ENCODE measurements at regions of chr3 and their contacts with region 1.

Region 1: DNA sequence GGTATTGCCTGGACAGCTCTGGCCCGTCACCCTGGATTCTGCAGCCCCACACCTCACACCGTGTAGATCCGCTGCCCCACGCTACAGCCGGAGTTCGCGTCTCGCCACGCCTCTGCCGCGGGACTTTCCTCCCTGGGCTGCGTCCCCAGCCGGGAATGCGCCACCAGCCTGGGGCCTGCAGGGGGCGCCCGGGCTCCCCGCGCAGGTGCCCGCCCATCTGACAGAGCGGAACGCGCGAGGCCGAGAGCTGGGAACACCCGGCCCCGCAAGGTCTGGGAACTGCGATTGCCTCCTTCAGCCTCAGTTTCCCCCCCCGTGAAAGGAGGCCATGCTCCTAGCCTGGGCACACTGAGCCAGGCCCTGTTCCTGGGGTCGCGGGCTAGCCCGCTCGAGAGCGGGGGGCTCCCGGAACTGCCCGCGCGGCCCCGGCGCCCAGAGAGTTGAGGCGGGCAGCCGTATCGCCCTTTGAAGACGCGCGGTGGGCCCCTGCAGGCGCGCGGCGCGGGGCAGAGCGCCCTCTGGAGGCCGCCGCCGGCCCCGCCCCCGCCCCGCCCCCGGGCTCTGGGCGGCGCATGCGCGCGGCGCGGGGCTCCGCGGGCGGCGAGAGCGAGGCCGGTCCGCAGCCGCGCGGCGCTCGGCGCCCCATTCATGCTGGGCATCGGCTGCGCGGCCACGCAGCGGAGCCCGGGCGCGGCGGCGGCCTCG is at the start of gene PLXNA1:
- DNase-seq: peak; percentile 76 to 91 (median 77)
- ATAC-seq: peak; percentile 47 to 85 (median 78)
- H3K4me3 ChIP-seq: peak within 1 kb of the TSS; percentile 60 to 91 (median 78)
- H3K27ac ChIP-seq: peak within 1 kb of the TSS in 11 of 12 donors; percentile 60 to 93 (median 74)
- H3K4me1 ChIP-seq: peaks cover 0 to 50% (median 24%) of the 10 kb centered on the region in 12 donors
- H3K27me3 ChIP-seq: peaks cover 0 to 4% (median 0%) of the 10 kb centered on the region in 9 donors
- CTCF ChIP-seq: peak; percentile 81 to 93 (median 88)
- POLR2A ChIP-seq: peak in 1 of 2 donors; percentile 35
- total RNA-seq, gene PLXNA1: 19.5 to 38.8 (median 29.6) TPM

Region 2: GRCh38 chr3:126752303-126752842 is 230.2 kb before region 1 on chr3:
- intact Hi-C with region 1: loop called (anchors 1 to 5 kb)
- DNase-seq: peak; percentile 72 to 88 (median 79)
- ATAC-seq: peak; percentile 85 to 94 (median 90)
- H3K4me3 ChIP-seq: no peak overlapping the region
- H3K27ac ChIP-seq: no peak overlapping the region
- H3K4me1 ChIP-seq: peaks cover 0 to 38% (median 12%) of the 10 kb centered on the region in 12 donors
- H3K27me3 ChIP-seq: no peaks in the 10 kb centered on the region
- CTCF ChIP-seq: peak; percentile 74 to 91 (median 86)
- POLR2A ChIP-seq: no peak

Region 3: DNA sequence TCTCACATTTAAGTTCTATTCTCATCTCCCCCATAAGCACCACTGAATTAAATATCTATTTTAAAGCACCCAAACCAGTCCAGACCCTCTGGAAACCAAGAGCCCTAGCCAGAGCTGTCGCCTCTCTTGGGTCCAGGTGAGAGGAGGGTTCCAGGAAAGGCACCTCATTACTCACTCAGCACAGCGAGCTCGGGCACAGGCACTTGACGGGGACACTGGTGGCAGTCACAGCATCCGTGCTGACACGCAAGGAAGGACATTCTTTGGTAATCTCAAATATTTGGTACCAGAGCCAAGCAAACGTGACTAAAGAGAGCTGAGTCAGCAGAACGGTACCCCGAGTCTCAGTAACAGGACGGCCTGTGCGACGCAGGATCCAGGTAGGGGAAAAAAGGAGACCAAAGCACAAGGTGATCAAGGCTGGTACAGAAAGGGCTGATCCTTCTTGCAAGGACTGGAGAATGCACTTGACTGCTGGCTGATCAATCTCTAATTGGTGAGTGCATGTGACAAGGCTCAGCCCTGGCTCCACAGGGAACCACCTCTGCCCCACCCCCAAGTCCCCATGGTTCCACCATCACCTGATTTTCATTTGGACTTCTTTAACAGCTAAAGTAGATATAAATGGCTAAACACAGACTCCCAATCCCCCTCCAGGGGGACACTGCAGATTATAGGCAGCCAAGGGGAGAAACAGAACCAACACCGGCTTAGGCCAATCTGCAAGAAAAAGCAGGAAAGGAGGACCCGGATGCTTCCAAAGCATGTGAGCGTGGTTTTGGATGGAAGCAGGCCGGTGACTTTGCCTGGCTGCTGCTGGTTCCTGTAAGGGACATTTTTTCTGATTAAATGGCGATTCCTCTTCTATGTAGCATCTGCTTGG is 217.2 kb before region 1 on chr3:
- intact Hi-C with region 1: no loop called
- DNase-seq: peak in 2 of 5 donors; percentile 45 to 58
- ATAC-seq: peak; percentile 56 to 71 (median 63)
- H3K4me3 ChIP-seq: no peak overlapping the region
- H3K27ac ChIP-seq: no peak overlapping the region
- H3K4me1 ChIP-seq: peaks cover 0 to 5% (median 0%) of the 10 kb centered on the region in 12 donors
- H3K27me3 ChIP-seq: no peaks in the 10 kb centered on the region
- CTCF ChIP-seq: no peak
- POLR2A ChIP-seq: no peak

Region 4: DNA sequence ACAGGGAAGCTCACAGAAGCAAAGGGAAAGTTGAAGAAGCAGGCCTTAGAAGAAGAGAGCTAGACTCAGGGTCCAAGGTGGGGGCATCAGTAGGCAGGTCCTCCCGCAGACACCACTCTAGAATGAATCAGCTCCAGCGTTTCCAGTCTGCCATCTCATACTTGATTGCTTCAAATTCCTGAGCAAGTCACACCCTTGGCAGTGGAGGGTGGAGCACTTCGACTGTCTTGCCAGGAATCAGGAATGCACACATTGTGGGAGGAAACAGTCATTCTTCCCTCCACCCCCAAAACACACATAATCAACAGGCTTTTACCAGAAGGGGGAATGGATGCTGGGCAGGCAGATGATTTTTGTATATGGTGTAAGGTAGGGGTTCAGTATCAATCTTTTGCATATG is 200.1 kb before region 1 on chr3:
- intact Hi-C with region 1: no loop called
- DNase-seq: no peak
- ATAC-seq: peak in 3 of 4 donors; percentile 28 to 76 (median 59)
- H3K4me3 ChIP-seq: no peak overlapping the region
- H3K27ac ChIP-seq: peak overlapping the region in 4 of 12 donors; percentile 30 to 59 (median 54)
- H3K4me1 ChIP-seq: peaks cover 0 to 11% (median 2%) of the 10 kb centered on the region in 12 donors
- H3K27me3 ChIP-seq: no peaks in the 10 kb centered on the region
- CTCF ChIP-seq: no peak
- POLR2A ChIP-seq: no peak

Region 5: DNA sequence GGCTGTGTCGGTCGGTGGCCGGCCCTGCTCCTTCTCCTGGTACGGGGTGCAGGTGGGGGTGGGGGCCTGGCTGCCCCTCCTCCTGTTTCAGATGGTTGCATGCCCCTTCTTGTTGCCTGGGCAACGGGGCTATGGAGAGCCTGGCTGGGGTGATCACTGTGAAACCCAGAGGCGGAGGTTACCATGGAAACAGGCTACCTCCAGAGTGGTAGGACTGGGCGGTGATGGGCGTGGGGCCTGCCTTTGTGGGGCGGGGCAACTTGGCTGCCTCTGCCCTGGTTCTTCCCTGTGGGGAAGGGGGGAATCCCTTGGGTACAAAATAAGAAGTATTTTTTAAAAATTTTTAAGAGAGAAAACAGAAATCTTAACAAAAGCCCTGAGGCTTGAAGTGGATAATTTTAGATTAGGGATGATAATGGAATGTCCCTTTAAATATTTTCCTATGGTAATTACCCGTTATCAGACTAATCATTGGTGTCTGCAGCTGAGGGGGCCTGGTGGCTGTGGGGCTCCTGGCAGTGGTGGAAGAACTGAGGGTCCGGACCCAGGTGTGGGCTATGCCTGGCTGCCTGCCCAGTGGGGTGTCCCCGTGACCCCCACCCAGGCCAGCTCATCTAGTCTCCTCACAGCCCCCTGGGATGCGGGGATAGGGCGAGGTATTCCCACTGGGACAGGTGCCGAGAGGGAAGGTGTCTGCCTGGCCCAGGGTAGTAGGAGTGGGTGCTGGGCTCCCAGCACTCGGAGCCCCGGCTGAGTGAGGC is 32.8 kb after region 1 on chr3:
- intact Hi-C with region 1: no loop called
- DNase-seq: no peak
- ATAC-seq: no peak
- H3K4me3 ChIP-seq: no peak overlapping the region
- H3K27ac ChIP-seq: no peak overlapping the region
- H3K4me1 ChIP-seq: peaks cover 0 to 19% (median 6%) of the 10 kb centered on the region in 12 donors
- H3K27me3 ChIP-seq: no peaks in the 10 kb centered on the region
- CTCF ChIP-seq: no peak
- POLR2A ChIP-seq: no peak

Region 6: DNA sequence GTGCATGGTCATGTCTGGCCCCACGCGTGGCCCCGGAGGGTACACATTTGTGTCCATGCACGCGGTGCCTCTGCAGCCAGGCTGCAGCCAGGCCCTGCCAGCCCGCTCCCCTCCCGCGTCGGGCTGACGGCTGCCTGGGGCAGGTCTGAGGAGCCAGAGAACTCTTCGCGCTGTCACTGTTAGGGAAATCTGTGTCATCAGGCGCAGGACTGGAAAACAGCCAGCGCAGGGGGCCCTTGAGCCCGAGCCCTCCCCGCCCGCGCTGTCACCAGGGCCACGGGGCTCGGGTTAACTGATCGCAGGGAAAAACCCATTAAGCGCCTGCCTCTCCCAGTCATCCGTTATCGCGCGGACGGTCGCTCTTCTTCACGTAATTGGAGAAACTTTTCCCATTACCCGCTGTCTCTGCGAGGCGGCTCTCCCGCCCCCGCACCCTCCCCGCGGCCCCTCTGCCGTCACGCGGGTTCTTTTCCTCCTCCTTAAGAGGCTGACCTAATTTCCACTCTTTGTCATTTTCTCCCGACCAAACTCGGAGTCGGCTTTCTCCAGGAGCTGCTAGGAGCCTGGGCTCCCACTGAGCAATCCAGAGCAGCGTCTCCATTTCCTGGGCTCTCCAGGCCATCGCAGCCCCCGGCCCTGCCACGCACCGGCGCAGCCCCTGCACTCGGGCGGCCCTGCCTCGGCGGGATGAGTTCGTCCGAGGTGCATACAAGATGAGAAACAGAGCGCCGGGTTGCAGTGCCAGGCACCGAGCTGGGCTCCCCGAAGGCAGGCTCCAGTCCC is 152.8 kb after region 1 on chr3:
- intact Hi-C with region 1: loop called in 1 of 10 experiments (anchors 10 kb)
- DNase-seq: peak; percentile 33 to 66 (median 63)
- ATAC-seq: peak in 3 of 4 donors; percentile 3 to 23 (median 6)
- H3K4me3 ChIP-seq: peak overlapping the region in 10 of 12 donors; percentile 4 to 53 (median 38)
- H3K27ac ChIP-seq: peak overlapping the region in 10 of 12 donors; percentile 34 to 85 (median 60)
- H3K4me1 ChIP-seq: peaks cover 0 to 52% (median 20%) of the 10 kb centered on the region in 12 donors
- H3K27me3 ChIP-seq: peaks cover 0 to 18% (median 0%) of the 10 kb centered on the region in 9 donors
- CTCF ChIP-seq: no peak
- POLR2A ChIP-seq: no peak

Region 7: DNA sequence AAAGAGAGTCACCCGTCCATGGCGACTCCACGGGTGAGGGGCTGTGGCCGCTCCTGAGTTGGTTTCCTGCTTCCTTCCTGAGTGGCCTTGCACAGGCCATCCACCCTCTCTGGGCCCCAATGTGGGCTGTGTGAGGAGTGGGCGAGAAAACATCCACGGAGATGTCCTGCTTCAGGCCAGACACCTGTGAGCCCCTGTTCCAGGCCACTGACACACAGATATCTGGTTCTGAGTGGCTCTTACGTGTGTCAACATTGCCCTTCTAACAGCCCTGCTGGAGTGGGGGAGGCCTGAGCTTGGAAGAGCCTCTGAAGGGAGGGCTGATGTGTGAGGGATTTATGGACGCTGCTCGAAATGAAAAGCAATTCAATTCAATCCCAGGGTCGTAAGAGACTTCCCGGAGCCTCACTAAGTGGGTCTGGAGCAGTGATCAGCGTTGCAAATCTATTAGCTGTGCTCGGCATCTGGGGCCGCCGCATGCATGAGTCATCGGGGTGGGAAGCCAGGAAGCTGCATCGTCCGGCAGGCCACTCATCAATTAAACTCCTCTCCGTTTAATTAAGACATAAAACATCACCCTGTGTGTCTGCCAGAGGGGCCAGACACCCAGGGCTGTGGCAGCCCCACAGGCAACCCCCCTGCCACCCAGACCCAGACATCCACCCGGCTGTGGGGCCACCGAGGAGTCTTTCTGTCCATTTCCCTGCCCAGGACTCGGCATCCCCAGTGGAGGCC is 190.3 kb after region 1 on chr3:
- intact Hi-C with region 1: loop called in 4 of 10 experiments (anchors 5 to 10 kb)
- DNase-seq: no peak
- ATAC-seq: no peak
- H3K4me3 ChIP-seq: no peak overlapping the region
- H3K27ac ChIP-seq: no peak overlapping the region
- H3K4me1 ChIP-seq: peaks cover 0 to 7% (median 0%) of the 10 kb centered on the region in 12 donors
- H3K27me3 ChIP-seq: peaks cover 0 to 17% (median 0%) of the 10 kb centered on the region in 9 donors
- CTCF ChIP-seq: no peak
- POLR2A ChIP-seq: no peak

Region 8: DNA sequence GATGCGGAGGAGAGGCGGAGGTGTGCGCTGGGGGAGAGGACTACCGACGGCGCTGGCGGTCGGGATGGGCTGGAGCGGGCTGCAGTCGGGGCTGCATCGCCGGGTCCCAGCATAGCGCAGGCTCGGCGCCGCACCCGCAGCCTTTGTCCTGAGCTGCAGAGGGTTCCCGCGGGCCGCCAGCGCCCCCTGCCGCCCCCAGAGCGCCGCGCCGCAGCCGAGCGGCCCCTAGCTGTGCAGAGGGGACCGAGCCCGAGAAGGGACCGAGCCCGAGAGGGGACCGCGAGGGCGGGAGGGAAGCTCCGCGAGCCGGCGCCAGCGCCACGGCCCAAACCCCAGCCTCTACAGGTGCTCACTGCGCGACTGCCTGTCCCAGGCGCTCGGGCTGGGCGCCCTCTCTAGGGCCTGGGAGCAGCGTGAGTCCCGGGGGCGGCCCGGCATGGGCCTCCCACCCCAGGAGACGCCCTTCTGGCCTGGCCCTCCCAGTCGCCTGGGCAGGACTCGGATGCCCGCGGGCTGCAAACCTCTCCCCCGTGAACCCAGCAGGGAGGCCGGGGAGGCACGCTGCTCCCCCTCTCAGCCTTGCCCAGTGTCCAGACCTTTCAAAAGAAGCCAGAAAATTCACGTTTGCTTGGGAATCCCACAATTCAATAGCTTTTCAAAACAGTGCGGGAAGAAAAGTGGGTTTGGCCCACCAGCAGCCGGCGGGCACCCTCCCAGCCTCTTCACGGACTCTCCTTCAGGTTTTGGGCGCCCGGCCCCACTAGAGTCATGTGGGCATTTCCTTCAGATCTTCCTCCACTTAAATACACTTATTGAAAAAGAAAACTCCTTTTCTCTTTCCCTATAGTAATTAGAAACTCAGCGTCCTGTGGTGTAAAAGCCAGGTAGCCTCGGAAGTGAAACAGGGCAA is 473.2 kb after region 1 on chr3:
- intact Hi-C with region 1: loop called in 4 of 10 experiments (anchors 2 to 10 kb)
- DNase-seq: peak; percentile 57 to 86 (median 66)
- ATAC-seq: peak; percentile 55 to 93 (median 87)
- H3K4me3 ChIP-seq: peak overlapping the region in 10 of 12 donors; percentile 8 to 47 (median 30)
- H3K27ac ChIP-seq: no peak overlapping the region
- H3K4me1 ChIP-seq: peaks cover 0 to 24% (median 17%) of the 10 kb centered on the region in 12 donors
- H3K27me3 ChIP-seq: peaks cover 12 to 68% (median 54%) of the 10 kb centered on the region in 9 donors
- CTCF ChIP-seq: peak; percentile 85 to 98 (median 93)
- POLR2A ChIP-seq: no peak

Region 9: DNA sequence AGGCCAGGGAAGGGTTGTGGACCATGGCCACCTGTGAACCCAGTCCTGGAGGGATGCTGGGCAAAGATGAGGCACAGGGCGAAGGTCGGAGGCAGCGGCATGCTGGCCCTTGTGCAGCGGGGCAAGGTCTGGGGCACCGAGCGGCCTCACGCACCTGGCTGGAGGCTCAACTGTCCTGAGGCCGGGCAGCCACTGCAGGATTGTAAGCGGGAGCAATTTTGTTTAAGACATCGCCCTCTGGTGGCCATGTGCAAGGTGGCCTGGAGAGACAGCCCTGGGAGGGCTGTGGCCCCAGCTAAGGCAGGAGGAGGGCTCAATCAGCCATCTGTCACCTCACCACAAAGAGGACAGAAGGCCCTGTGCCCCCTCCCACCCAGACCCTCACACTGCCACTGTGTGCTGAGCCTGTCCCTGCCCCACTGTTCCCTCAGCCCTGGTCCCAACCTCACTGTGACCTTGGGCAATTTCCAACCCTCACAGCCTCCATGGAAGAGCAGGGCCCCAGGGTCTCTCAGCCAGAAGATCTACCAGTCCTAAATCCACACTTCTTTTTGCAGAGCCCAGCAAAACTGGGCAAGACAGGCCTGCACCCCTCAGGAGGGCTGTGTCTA is 561.7 kb after region 1 on chr3:
- intact Hi-C with region 1: loop called in 6 of 10 experiments (anchors 5 to 10 kb)
- DNase-seq: peak; percentile 61 to 81 (median 76)
- ATAC-seq: peak in 3 of 4 donors; percentile 44 to 58 (median 46)
- H3K4me3 ChIP-seq: no peak overlapping the region
- H3K27ac ChIP-seq: no peak overlapping the region
- H3K4me1 ChIP-seq: peaks cover 0 to 16% (median 5%) of the 10 kb centered on the region in 12 donors
- H3K27me3 ChIP-seq: no peaks in the 10 kb centered on the region
- CTCF ChIP-seq: peak; percentile 68 to 85 (median 76)
- POLR2A ChIP-seq: no peak

Measured in heart left ventricle (tissue), 16 donors.